Caco-2 (cell line): ENCODE measurements at regions of chr3 and their contacts with region 1.

Region 1: DNA sequence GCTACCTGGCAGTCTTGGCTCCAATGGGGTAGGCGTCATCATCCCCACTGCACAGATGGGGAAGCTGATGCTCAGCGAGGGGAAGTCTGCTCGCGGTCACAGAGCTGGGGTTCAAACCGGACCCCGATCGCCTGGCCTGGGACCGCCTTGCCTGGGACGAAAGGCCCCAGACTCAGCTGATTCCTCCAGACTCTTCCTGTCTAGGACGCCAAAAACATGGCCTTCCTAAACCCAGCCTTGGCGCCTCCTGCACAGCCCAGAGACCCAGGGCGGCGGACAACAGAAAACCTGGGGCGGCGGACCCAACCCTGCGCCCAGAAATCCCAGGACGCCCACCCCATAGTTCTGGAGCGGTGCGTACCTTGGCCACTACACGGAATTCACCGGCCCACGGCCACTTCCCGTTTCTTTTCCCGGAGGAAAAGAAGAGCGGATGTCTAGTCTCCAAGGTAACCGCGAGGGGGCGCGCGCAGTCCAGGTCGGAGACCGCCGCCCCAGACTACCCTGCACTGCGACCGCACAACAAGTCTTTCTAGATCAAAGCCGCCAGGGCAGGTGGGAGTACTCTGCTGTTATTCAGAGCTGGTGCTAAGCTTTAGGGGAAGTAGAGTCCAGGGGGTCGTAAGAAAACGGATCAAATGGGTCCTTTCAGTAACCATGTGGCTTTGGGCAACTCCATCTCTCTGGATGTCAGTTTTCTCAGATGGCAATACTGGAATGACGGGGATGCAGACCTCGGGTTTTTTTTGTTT is 4.9 kb upstream of the IL17RD start:
- DNase-seq: peak; percentile 76 to 88
- H3K4me3 ChIP-seq: peak overlapping the region; percentile 49
- H3K4me3 Mint-ChIP-seq: peak overlapping the region; percentile 72
- H3K27ac Mint-ChIP-seq: no peak overlapping the region
- H3K4me1 ChIP-seq: no peaks in the 10 kb centered on the region
- H3K4me1 Mint-ChIP-seq: peaks cover 14% of the 10 kb centered on the region
- H3K27me3 ChIP-seq: no peaks in the 10 kb centered on the region
- H3K27me3 Mint-ChIP-seq: no peaks in the 10 kb centered on the region
- CTCF ChIP-seq: peak; percentile 82 to 85

Region 2: GRCh38 chr3:57100046-57100695 is 69.9 kb before region 1 on chr3:
- CTCF ChIA-PET with region 1: no interaction called
- POLR2A ChIA-PET with region 1: no interaction called
- intact Hi-C with region 1: loop called (anchors 2 kb)
- DNase-seq: peak; percentile 61 to 81
- H3K4me3 ChIP-seq: no peak overlapping the region
- H3K4me3 Mint-ChIP-seq: no peak overlapping the region
- H3K27ac Mint-ChIP-seq: no peak overlapping the region
- H3K4me1 ChIP-seq: 0 out of 2 replicates have a peak, but pooled peaks cover 7% of the 10 kb centered on the region
- H3K4me1 Mint-ChIP-seq: peaks cover 10% of the 10 kb centered on the region
- H3K27me3 ChIP-seq: no peaks in the 10 kb centered on the region
- H3K27me3 Mint-ChIP-seq: no peaks in the 10 kb centered on the region
- CTCF ChIP-seq: peak; percentile 65 to 89

Region 3: DNA sequence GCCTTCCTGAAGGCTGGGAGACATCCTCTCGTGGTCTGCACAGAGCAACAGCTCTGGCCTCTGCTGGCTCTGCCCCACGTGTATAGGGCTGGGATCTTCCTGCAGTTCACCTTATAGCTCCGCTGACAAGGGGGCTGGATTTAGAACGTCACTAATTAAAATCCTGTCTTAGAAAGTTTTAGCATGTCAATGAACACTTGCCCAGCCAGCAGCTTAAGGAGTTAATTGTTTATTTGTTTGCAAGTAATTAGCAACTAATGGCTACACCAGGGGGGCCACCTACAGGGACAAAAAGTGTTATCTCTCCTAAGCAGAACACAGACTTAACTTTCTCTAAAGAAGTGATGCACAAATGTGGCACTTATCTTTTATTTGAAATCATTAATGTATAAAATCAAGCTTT is 29.8 kb after region 1 on chr3 and contains the start of gene HESX1:
- CTCF ChIA-PET with region 1: no interaction called
- POLR2A ChIA-PET with region 1: no interaction called
- intact Hi-C with region 1: no loop called
- DNase-seq: no peak
- H3K4me3 ChIP-seq: no peak within 1 kb of the TSS
- H3K4me3 Mint-ChIP-seq: no peak within 1 kb of the TSS
- H3K27ac Mint-ChIP-seq: no peak within 1 kb of the TSS
- H3K4me1 ChIP-seq: peaks cover 10% of the 10 kb centered on the region
- H3K4me1 Mint-ChIP-seq: peaks cover 7% of the 10 kb centered on the region
- H3K27me3 ChIP-seq: no peaks in the 10 kb centered on the region
- H3K27me3 Mint-ChIP-seq: no peaks in the 10 kb centered on the region
- CTCF ChIP-seq: no peak
- total RNA-seq, gene HESX1: 1.2 and 1.5 TPM in 2 replicates

Region 4: DNA sequence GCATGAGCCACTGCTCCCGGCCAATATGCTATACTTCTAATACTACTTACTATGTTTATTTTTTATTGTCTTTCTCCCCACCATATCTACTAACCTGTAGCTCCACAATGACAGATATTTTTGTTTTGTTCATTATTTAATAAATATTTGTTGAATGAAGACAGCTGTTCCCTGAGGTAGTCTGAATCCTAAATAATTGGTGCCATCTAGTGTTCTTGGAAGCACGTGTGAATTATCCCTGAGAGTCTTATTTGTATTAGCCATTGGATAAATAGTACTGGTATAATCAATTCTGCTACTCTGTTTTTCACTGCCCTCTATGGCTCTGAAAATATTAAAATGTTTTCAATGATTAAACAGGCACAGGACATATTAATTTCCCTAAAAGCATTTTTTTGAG is 51.8 kb after region 1 on chr3:
- CTCF ChIA-PET with region 1: interaction called, 3 read pairs
- POLR2A ChIA-PET with region 1: no interaction called
- intact Hi-C with region 1: loop called (anchors 1 kb)
- DNase-seq: no peak
- H3K4me3 ChIP-seq: no peak overlapping the region
- H3K4me3 Mint-ChIP-seq: no peak overlapping the region
- H3K27ac Mint-ChIP-seq: no peak overlapping the region
- H3K4me1 ChIP-seq: peaks cover 7% of the 10 kb centered on the region; the same call in 1 of the 2 replicates
- H3K4me1 Mint-ChIP-seq: peaks cover 12% of the 10 kb centered on the region
- H3K27me3 ChIP-seq: no peaks in the 10 kb centered on the region
- H3K27me3 Mint-ChIP-seq: no peaks in the 10 kb centered on the region
- CTCF ChIP-seq: peak; percentile 25 to 49

Region 5: GRCh38 chr3:57227204-57227929 is 57.3 kb after region 1 on chr3 and contains the start of gene APPL1:
- CTCF ChIA-PET with region 1: no interaction called
- POLR2A ChIA-PET with region 1: no interaction called
- intact Hi-C with region 1: loop called (anchors 1 kb)
- DNase-seq: peak; percentile 93 to 98
- H3K4me3 ChIP-seq: peak within 1 kb of the TSS; percentile 90
- H3K4me3 Mint-ChIP-seq: peak within 1 kb of the TSS; percentile 83
- H3K27ac Mint-ChIP-seq: peak within 1 kb of the TSS; percentile 80
- H3K4me1 ChIP-seq: peaks cover 13% of the 10 kb centered on the region; the same call in 1 of the 2 replicates
- H3K4me1 Mint-ChIP-seq: peaks cover 12% of the 10 kb centered on the region
- H3K27me3 ChIP-seq: no peaks in the 10 kb centered on the region
- H3K27me3 Mint-ChIP-seq: no peaks in the 10 kb centered on the region
- CTCF ChIP-seq: no peak
- total RNA-seq, gene APPL1: 40.0 and 40.7 TPM in 2 replicates

Region 6: DNA sequence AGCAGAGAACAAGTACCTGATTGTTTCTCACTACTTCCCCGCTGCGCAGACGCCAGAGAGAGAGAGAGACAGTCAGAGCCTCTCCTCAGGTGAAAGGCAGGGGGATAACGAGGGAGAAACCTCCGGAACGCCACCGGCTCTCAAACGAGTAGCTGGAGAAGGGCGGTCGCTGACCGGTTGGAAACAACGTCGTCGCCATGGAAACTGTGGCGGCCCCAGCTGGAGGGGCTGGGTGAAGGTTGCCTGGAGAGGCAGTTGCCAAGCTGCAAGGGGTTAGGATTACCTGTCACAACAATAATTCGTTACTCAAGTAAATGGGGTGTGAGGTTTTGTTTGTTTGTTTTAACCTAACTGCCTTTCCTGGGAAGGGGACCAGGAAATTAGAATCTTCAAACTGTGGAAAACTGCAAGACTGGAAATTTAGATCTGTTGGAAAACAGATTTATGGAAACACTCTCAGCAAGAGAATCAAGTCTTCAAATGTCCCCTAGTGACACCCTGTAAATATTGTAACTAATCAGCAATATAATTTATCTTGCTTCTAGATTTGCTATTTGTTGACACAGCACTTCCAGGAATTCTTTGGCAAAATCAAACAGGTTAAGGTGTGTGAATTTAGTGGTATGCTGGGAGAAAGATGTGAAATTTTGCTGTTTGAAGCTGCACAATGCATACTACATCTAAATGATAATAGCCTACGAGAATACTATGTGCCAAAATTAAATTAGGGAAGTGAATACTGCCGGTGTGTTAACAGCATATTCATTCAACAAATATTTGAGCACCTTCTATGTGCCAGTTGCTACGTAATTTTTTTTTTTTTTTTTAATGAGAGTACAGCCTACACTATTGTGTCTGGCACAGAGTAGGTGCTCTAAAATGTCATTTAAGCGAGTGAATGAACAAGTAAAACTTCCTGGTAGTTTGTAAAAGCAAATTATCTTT is 374.4 kb after region 1 on chr3 and contains the start of gene DNAH12:
- CTCF ChIA-PET with region 1: no interaction called
- POLR2A ChIA-PET with region 1: no interaction called
- intact Hi-C with region 1: loop called (anchors 10 kb)
- DNase-seq: peak; percentile 77 to 81
- H3K4me3 ChIP-seq: no peak within 1 kb of the TSS
- H3K4me3 Mint-ChIP-seq: peak within 1 kb of the TSS; percentile 61
- H3K27ac Mint-ChIP-seq: peak within 1 kb of the TSS; percentile 63
- H3K4me1 ChIP-seq: peaks cover 9% of the 10 kb centered on the region; the same call in 1 of the 2 replicates
- H3K4me1 Mint-ChIP-seq: peaks cover 6% of the 10 kb centered on the region
- H3K27me3 ChIP-seq: no peaks in the 10 kb centered on the region
- H3K27me3 Mint-ChIP-seq: no peaks in the 10 kb centered on the region
- CTCF ChIP-seq: no peak
- total RNA-seq, gene DNAH12: 0.45 and 1.5 TPM in 2 replicates